GM12878 (cell line): ENCODE measurements at regions of chrX and their contacts with region 1.

Region 1: GRCh38 chrX:26851981-26852380 is 611.2 kb downstream of the PPP4R3C start:
- DNase-seq: no peak
- ATAC-seq: peak; percentile 96
- H3K4me3 ChIP-seq: no peak overlapping the region
- H3K27ac ChIP-seq: no peak overlapping the region
- H3K4me1 ChIP-seq: no peaks in the 10 kb centered on the region
- H3K27me3 ChIP-seq: no peaks in the 10 kb centered on the region
- CTCF ChIP-seq: peak in 2 of 3 experiments; percentile 27 to 53; a peak in 3 of 6 replicates
- EP300 ChIP-seq: no peak
- POLR2A ChIP-seq: no peak
- RAD21 ChIP-seq: peak; percentile 64

Region 2: DNA sequence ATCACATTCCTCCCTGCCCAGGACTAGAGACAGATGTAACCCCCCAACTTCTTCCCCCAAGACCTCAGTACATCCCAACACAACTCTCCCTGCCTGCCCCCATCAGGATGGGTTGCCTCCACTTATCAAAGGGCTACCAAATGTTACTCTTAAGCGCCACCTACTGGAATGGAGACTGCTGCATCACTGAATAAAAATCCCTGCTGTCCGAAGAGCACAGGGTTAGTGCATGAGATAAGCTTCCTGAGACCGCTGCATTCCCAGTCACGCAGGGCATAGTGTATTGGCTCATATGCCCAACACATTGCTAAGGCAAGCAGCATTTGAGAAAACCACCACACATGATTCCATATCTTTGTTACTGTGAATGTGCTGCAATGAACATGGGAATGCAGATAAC is 66.7 kb after region 1 on chrX:
- CTCF ChIA-PET with region 1: interaction called, 43 read pairs
- POLR2A ChIA-PET with region 1: interaction called, 3 read pairs
- RAD21 ChIA-PET with region 1: interaction called, 54 read pairs
- SMC1A ChIA-PET with region 1: interaction called, 55 read pairs
- in situ Hi-C with region 1: no loop called
- intact Hi-C with region 1: loop called (anchors 1 kb)
- DNase-seq: no peak
- ATAC-seq: peak; percentile 87
- H3K4me3 ChIP-seq: no peak overlapping the region
- H3K27ac ChIP-seq: no peak overlapping the region
- H3K4me1 ChIP-seq: no peaks in the 10 kb centered on the region
- H3K27me3 ChIP-seq: no peaks in the 10 kb centered on the region
- CTCF ChIP-seq: peak; percentile 55 to 63 (median 60)
- EP300 ChIP-seq: no peak
- POLR2A ChIP-seq: no peak
- RAD21 ChIP-seq: peak; percentile 69